Activated CD8-positive, alpha-beta T cell treated with anti-CD3 and anti-CD28 coated beads for 36 hours (primary cell): ENCODE measurements at regions of chr17 and their contacts with region 1.

Region 1: GRCh38 chr17:29617125-29617480 is 5.6 kb downstream of the CORO6 start:
- DNase-seq: peak; percentile 97
- ATAC-seq: peak; percentile 77
- H3K4me3 Mint-ChIP-seq: peak overlapping the region; percentile 84
- H3K27ac Mint-ChIP-seq: peak overlapping the region; percentile 88
- H3K4me1 Mint-ChIP-seq: peaks cover 40% of the 10 kb centered on the region
- H3K27me3 Mint-ChIP-seq: peaks cover 2% of the 10 kb centered on the region
- CTCF ChIP-seq: peak; percentile 66

Region 2: GRCh38 chr17:29579866-29580771 is 37.0 kb before region 1 on chr17:
- CTCF ChIA-PET with region 1: interaction called, 172 read pairs
- POLR2A ChIA-PET with region 1: interaction called, 18 read pairs
- intact Hi-C with region 1: loop called (anchors 5 kb)
- DNase-seq: peak; percentile 97
- ATAC-seq: peak; percentile 97
- H3K4me3 Mint-ChIP-seq: no peak overlapping the region
- H3K27ac Mint-ChIP-seq: peak overlapping the region; percentile 89
- H3K4me1 Mint-ChIP-seq: peaks cover 27% of the 10 kb centered on the region
- H3K27me3 Mint-ChIP-seq: no peaks in the 10 kb centered on the region
- CTCF ChIP-seq: peak; percentile 83

Region 3: GRCh38 chr17:29627955-29628354 is 10.9 kb after region 1 on chr17:
- CTCF ChIA-PET with region 1: interaction called, 18 read pairs
- POLR2A ChIA-PET with region 1: interaction called, 7 read pairs
- intact Hi-C with region 1: no loop called
- DNase-seq: no peak
- ATAC-seq: no peak
- H3K4me3 Mint-ChIP-seq: no peak overlapping the region
- H3K27ac Mint-ChIP-seq: peak overlapping the region; percentile 27
- H3K4me1 Mint-ChIP-seq: peaks cover 60% of the 10 kb centered on the region
- H3K27me3 Mint-ChIP-seq: no peaks in the 10 kb centered on the region
- CTCF ChIP-seq: no peak

Region 4: GRCh38 chr17:29682054-29682453 is 65.0 kb after region 1 on chr17:
- CTCF ChIA-PET with region 1: interaction called, 6 read pairs
- POLR2A ChIA-PET with region 1: interaction called, 10 read pairs
- intact Hi-C with region 1: no loop called
- DNase-seq: no peak
- ATAC-seq: peak; percentile 60
- H3K4me3 Mint-ChIP-seq: no peak overlapping the region
- H3K27ac Mint-ChIP-seq: peak overlapping the region; percentile 22
- H3K4me1 Mint-ChIP-seq: peaks cover 27% of the 10 kb centered on the region
- H3K27me3 Mint-ChIP-seq: no peaks in the 10 kb centered on the region
- CTCF ChIP-seq: no peak

Region 5: GRCh38 chr17:29722411-29723198 is 105.5 kb after region 1 on chr17:
- CTCF ChIA-PET with region 1: interaction called, 11 read pairs
- POLR2A ChIA-PET with region 1: interaction called, 6 read pairs
- intact Hi-C with region 1: no loop called
- DNase-seq: peak; percentile 37
- ATAC-seq: peak; percentile 57
- H3K4me3 Mint-ChIP-seq: peak overlapping the region; percentile 30
- H3K27ac Mint-ChIP-seq: peak overlapping the region; percentile 66
- H3K4me1 Mint-ChIP-seq: peaks cover 77% of the 10 kb centered on the region
- H3K27me3 Mint-ChIP-seq: no peaks in the 10 kb centered on the region
- CTCF ChIP-seq: no peak

Region 6: DNA sequence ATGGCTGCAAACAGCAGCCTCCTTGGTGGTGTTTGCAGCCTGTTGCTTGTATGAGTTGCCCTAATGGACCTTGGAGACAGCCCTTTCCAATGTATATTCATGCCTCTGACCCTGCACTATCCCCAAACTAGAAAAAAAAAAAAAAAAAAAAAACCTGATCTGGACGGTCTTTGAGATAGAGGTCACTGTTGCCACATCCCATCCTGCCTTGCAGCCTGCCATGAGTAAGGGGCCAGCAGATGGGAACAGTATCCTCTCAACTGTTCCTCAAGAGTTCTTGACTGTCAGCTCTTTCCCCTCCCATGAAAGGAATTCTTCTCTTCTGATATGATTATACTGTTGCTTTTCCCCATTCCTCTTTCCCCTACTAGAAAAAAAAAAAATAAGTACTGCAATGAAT is 160.6 kb after region 1 on chr17:
- CTCF ChIA-PET with region 1: interaction called, 71 read pairs
- POLR2A ChIA-PET with region 1: no interaction called
- intact Hi-C with region 1: no loop called
- DNase-seq: no peak
- ATAC-seq: no peak
- H3K4me3 Mint-ChIP-seq: no peak overlapping the region
- H3K27ac Mint-ChIP-seq: no peak overlapping the region
- H3K4me1 Mint-ChIP-seq: peaks cover 8% of the 10 kb centered on the region
- H3K27me3 Mint-ChIP-seq: no peaks in the 10 kb centered on the region
- CTCF ChIP-seq: no peak